Endothelial cell of umbilical vein (primary cell): ENCODE measurements at regions of chr2 and their contacts with region 1.

Region 1: DNA sequence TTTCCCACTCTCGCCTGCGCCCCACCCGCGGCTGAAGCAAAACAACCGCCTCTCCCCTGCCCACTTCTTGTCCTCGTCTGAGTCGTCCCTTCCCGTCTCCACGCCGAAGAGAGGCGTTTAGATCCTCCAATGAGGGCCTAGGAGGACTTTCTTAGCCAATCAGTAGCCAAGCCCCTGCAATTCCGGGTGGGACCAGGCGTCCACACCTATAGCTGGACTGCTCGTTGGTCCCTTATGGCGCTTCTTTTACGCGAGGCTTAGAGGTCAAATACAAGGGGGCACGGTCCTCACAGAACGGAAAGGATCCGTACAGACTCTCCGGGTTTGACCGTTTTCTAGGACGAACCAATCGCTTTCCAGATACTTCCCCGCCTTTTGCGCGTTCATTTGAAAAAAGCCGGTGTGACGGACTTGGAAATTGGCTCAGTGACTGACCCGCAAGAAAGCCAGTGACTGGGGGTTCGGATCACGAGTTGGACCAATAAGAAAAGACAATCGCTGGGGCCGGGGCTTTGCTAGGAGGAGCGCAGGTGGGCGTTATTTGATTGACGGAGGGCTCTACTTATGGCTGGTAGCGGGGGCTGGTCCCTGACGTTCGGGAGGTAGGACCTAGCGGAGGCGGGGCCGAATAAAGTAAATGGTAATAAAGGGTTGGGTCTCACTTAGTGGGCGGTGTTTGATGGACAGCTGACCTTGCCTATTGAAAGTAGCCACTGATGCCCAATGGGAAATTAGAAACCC is 565 bp upstream of the PPM1B start:
- DNase-seq: peak; percentile 100
- H3K4me3 ChIP-seq: peak overlapping the region; percentile 38 to 82 (median 71)
- H3K27ac ChIP-seq: peak overlapping the region; percentile 97
- H3K4me1 ChIP-seq: peaks cover 15% of the 10 kb centered on the region
- H3K27me3 ChIP-seq: peaks cover 0 to 5% of the 10 kb centered on the region in 2 experiments
- CTCF ChIP-seq: no peak
- POLR2A ChIP-seq: no peak

Region 2: GRCh38 chr2:43995733-43996533 is 172.2 kb before region 1 on chr2 and contains the start of gene LRPPRC:
- CTCF ChIA-PET with region 1: interaction called, 4 read pairs
- POLR2A ChIA-PET with region 1: no interaction called
- dilution Hi-C with region 1: no loop called
- intact Hi-C with region 1: loop called (anchors 2 kb)
- DNase-seq: peak; percentile 95
- H3K4me3 ChIP-seq: peak within 1 kb of the TSS; percentile 57 to 99 (median 76)
- H3K27ac ChIP-seq: peak within 1 kb of the TSS; percentile 87
- H3K4me1 ChIP-seq: peaks cover 13% of the 10 kb centered on the region
- H3K27me3 ChIP-seq: no peaks in the 10 kb centered on the region
- CTCF ChIP-seq: no peak
- POLR2A ChIP-seq: peak; percentile 90
- total RNA-seq, gene LRPPRC: 68.2 and 94.0 TPM in 2 replicates

Region 3: GRCh38 chr2:44087036-44087713 is 80.9 kb before region 1 on chr2:
- CTCF ChIA-PET with region 1: no interaction called
- POLR2A ChIA-PET with region 1: no interaction called
- dilution Hi-C with region 1: no loop called
- intact Hi-C with region 1: loop called (anchors 1 kb)
- DNase-seq: peak; percentile 85
- H3K4me3 ChIP-seq: peak overlapping the region in 2 of 3 experiments; percentile 15 to 45
- H3K27ac ChIP-seq: no peak overlapping the region
- H3K4me1 ChIP-seq: peaks cover 4% of the 10 kb centered on the region
- H3K27me3 ChIP-seq: peaks cover 19 to 27% of the 10 kb centered on the region in 2 experiments
- CTCF ChIP-seq: peak; percentile 92 to 95
- POLR2A ChIP-seq: no peak

Region 4: GRCh38 chr2:44233450-44234128 is 65.5 kb after region 1 on chr2:
- CTCF ChIA-PET with region 1: interaction called, 6 read pairs
- POLR2A ChIA-PET with region 1: no interaction called
- dilution Hi-C with region 1: no loop called
- intact Hi-C with region 1: loop called (anchors 1 kb)
- DNase-seq: peak; percentile 82
- H3K4me3 ChIP-seq: no peak overlapping the region
- H3K27ac ChIP-seq: peak overlapping the region; percentile 35
- H3K4me1 ChIP-seq: peaks cover 21% of the 10 kb centered on the region
- H3K27me3 ChIP-seq: no peaks in the 10 kb centered on the region
- CTCF ChIP-seq: no peak
- POLR2A ChIP-seq: no peak

Region 5: GRCh38 chr2:44361330-44362206 is 193.5 kb after region 1 on chr2 and contains the starts of genes CAMKMT and PREPL:
- CTCF ChIA-PET with region 1: no interaction called
- POLR2A ChIA-PET with region 1: no interaction called
- dilution Hi-C with region 1: no loop called
- intact Hi-C with region 1: loop called (anchors 1 kb)
- DNase-seq: peak; percentile 97
- H3K4me3 ChIP-seq: peak within 1 kb of the TSS; percentile 59 to 89 (median 86)
- H3K27ac ChIP-seq: peak within 1 kb of the TSS; percentile 99
- H3K4me1 ChIP-seq: peaks cover 24% of the 10 kb centered on the region
- H3K27me3 ChIP-seq: no peaks in the 10 kb centered on the region
- CTCF ChIP-seq: no peak
- POLR2A ChIP-seq: peak; percentile 82
- total RNA-seq, gene CAMKMT: 8.2 and 10.7 TPM in 2 replicates
- total RNA-seq, gene PREPL: 25.7 and 26.0 TPM in 2 replicates

Region 6: GRCh38 chr2:44377486-44377885 is 209.4 kb after region 1 on chr2:
- CTCF ChIA-PET with region 1: no interaction called
- POLR2A ChIA-PET with region 1: no interaction called
- dilution Hi-C with region 1: no loop called
- intact Hi-C with region 1: no loop called
- DNase-seq: no peak
- H3K4me3 ChIP-seq: no peak overlapping the region
- H3K27ac ChIP-seq: no peak overlapping the region
- H3K4me1 ChIP-seq: no peaks in the 10 kb centered on the region
- H3K27me3 ChIP-seq: no peaks in the 10 kb centered on the region
- CTCF ChIP-seq: no peak
- POLR2A ChIP-seq: no peak

Region 7: DNA sequence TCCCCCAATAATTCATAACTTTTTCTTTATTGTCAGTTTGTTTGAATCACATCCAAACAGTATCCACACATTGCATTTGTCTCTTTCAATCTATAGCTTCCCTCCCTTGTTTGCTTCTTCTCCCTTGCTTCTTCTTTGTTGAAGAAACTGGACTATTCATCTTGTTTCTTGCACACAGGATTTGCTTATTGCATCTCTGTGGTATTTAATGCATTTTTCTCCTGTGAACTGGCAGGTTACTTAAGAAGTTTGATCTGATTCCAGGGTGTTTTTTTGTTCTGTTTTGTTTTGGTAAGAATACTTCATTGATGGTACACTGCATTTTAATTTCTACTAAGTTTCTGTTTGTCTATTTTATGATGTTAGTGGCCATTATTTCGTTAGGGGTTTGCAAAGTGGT is 360.5 kb after region 1 on chr2:
- CTCF ChIA-PET with region 1: no interaction called
- POLR2A ChIA-PET with region 1: no interaction called
- dilution Hi-C with region 1: no loop called
- intact Hi-C with region 1: no loop called
- DNase-seq: no peak
- H3K4me3 ChIP-seq: no peak overlapping the region
- H3K27ac ChIP-seq: no peak overlapping the region
- H3K4me1 ChIP-seq: no peaks in the 10 kb centered on the region
- H3K27me3 ChIP-seq: no peaks in the 10 kb centered on the region
- CTCF ChIP-seq: no peak
- POLR2A ChIP-seq: no peak